A673 (cell line): ENCODE measurements at regions of chr13 and their contacts with region 1.

Region 1: GRCh38 chr13:35984776-35985453 is 146.3 kb downstream of the DCLK1 start:
- DNase-seq: peak; percentile 70
- H3K4me3 ChIP-seq: no peak overlapping the region
- H3K27ac ChIP-seq: no peak overlapping the region
- H3K4me1 ChIP-seq: peaks cover 19% of the 10 kb centered on the region
- H3K27me3 ChIP-seq: no peaks in the 10 kb centered on the region
- CTCF ChIP-seq: no peak

Region 2: GRCh38 chr13:36712770-36713169 is 727.9 kb after region 1 on chr13:
- CTCF ChIA-PET with region 1: no interaction called
- POLR2A ChIA-PET with region 1: no interaction called
- intact Hi-C with region 1: no loop called
- DNase-seq: peak; percentile 64
- H3K4me3 ChIP-seq: no peak overlapping the region
- H3K27ac ChIP-seq: peak overlapping the region; percentile 12
- H3K4me1 ChIP-seq: peaks cover 46% of the 10 kb centered on the region
- H3K27me3 ChIP-seq: no peaks in the 10 kb centered on the region
- CTCF ChIP-seq: no peak

Region 3: GRCh38 chr13:37068962-37069361 is 1084.0 kb after region 1 on chr13:
- CTCF ChIA-PET with region 1: no interaction called
- POLR2A ChIA-PET with region 1: no interaction called
- intact Hi-C with region 1: loop called (anchors 10 kb)
- DNase-seq: peak; percentile 50
- H3K4me3 ChIP-seq: no peak overlapping the region
- H3K27ac ChIP-seq: no peak overlapping the region
- H3K4me1 ChIP-seq: no peaks in the 10 kb centered on the region
- H3K27me3 ChIP-seq: no peaks in the 10 kb centered on the region
- CTCF ChIP-seq: peak; percentile 70

Region 4: DNA sequence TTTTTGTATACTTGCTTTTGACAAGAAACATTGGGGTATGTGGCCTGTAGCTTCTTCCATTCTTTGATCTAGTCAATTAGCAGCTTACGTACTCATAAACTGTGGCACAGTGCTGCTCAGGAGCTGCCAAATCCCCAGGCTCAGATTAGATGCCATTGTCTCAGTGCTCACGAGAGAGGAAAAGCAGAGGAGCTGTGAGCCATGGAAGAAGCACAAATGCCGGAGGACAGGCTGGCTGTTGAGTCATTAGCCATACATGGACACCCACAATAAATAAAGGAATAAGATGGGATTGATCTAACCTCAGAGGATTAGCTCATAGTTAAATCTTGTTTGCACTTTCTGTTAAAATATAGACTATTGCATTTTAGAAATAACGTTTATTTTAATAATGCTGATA is 1492.0 kb after region 1 on chr13:
- CTCF ChIA-PET with region 1: no interaction called
- POLR2A ChIA-PET with region 1: no interaction called
- intact Hi-C with region 1: no loop called
- DNase-seq: no peak
- H3K4me3 ChIP-seq: no peak overlapping the region
- H3K27ac ChIP-seq: no peak overlapping the region
- H3K4me1 ChIP-seq: peaks cover 5% of the 10 kb centered on the region
- H3K27me3 ChIP-seq: no peaks in the 10 kb centered on the region
- CTCF ChIP-seq: no peak